H1 (cell line): ENCODE measurements at regions of chr1 and their contacts with region 1.

Region 1: DNA sequence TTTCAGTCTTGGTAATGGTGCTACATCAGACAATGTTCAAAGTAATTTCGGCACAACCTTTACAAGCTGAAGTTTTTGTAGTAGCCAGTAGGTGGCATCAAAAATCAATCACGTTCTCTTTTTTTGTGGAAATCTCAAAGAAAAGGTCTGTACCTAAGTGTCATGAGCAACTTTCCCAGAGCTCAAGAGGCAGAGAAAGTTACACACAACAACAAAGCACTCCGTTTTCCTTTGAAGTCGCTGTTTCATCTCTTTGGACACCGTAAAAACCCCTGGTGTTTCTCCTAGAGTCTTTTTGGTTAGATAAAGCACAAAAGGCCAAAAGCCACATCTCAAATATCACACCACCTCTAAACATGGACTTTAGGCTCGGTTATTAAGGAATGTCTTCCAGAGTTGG is 131.6 kb downstream of the LHX8 start:
- DNase-seq: no peak
- H3K4me3 ChIP-seq: no peak overlapping the region
- H3K27ac ChIP-seq: no peak overlapping the region
- H3K4me1 ChIP-seq: no peaks in the 10 kb centered on the region
- H3K27me3 ChIP-seq: no peaks in the 10 kb centered on the region
- CTCF ChIP-seq: peak in 2 of 3 experiments; percentile 45 to 55; a peak in 2 of 4 replicates
- EP300 ChIP-seq: no peak
- POLR2A ChIP-seq: no peak
- RAD21 ChIP-seq: peak; percentile 78 to 81

Region 2: DNA sequence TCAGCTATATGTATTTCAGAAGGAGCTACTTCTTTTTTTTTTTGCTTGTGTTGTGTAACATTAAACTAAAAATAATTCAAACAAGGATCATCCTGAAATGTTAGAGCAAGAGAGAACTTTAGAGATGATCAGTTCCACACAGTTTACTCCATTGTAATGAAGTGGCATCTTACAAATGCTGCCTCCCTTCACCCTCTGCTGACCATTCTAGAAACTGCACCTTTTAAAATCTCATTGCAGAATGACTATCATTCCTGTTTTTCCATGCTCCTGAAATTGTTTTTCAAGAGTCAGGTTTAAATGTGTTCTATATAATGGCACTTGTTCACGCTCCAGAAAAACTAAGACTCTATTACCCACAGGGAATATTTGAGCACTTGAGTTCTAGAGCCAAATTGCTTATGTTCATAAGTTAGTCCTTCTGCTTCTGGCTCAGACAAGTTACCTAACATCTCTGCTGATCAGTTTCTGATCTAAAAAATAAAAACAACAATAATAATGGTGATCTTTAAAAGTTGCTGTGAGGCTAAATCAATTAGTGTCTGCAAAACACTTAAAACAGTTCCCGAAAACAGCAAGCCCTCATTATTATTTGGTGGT is 366.7 kb after region 1 on chr1:
- CTCF ChIA-PET with region 1: interaction called, 19 read pairs
- POLR2A ChIA-PET with region 1: no interaction called
- DNase-seq: no peak
- H3K4me3 ChIP-seq: no peak overlapping the region
- H3K27ac ChIP-seq: no peak overlapping the region
- H3K4me1 ChIP-seq: peaks cover 0 to 6% (median under 1%) of the 10 kb centered on the region in 4 experiments; a peak in 4 of 7 replicates
- H3K27me3 ChIP-seq: peaks cover 0 to 1% (median 0%) of the 10 kb centered on the region in 4 experiments; a peak in 1 of 7 replicates
- CTCF ChIP-seq: peak in 2 of 3 experiments; percentile 49 to 61; a peak in 2 of 4 replicates
- EP300 ChIP-seq: no peak
- POLR2A ChIP-seq: no peak
- RAD21 ChIP-seq: peak; percentile 76 to 78